Activated CD4-positive, alpha-beta memory T cell treated with anti-CD3 and anti-CD28 coated beads for 36 hours (primary cell): ENCODE measurements at regions of chr1 and their contacts with region 1.

Region 1: DNA sequence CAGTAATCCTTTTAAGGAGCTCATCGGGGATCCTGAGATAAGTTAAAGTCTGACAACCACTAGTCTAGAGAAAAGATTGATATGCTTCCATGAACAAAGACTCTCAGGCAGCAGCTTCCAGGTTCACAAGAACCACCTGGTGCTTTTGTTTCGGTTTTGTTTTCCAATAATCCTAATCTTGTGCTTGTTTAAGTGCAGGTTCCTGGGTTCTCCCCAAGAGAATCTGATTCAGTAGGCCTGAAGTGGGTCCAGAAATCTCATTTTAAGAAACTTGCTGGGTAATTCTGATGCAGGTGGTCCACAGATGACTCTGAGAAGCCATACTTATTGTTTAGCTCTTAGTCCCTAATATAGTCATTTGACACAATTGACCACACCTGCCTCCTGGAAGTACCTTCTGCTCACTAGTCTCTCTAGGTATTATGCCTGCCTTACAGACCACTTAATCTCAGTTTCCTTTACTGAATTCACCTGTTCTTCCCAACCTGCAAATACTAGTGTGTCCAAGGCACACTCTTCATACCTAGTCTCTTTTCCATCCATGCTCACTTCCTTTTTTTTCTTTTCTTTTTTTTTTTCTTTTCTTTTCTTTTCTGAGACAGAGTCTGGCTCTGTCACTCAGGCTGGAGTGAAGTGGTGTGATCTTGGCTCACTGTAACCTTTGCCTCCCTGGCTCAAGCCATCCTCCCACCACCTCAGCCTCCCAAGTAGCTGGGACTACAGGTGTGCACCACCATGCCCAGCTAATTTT is 20.5 kb upstream of the FRRS1 start:
- DNase-seq: no peak
- H3K4me3 Mint-ChIP-seq: no peak overlapping the region
- H3K27ac Mint-ChIP-seq: no peak overlapping the region
- H3K4me1 Mint-ChIP-seq: peaks cover 19% of the 10 kb centered on the region
- H3K27me3 Mint-ChIP-seq: peaks cover 20% of the 10 kb centered on the region

Region 2: GRCh38 chr1:99751877-99752504 is 34.9 kb before region 1 on chr1:
- CTCF ChIA-PET with region 1: no interaction called
- POLR2A ChIA-PET with region 1: no interaction called
- intact Hi-C with region 1: loop called (anchors 2 kb)
- DNase-seq: peak; percentile 25
- H3K4me3 Mint-ChIP-seq: no peak overlapping the region
- H3K27ac Mint-ChIP-seq: no peak overlapping the region
- H3K4me1 Mint-ChIP-seq: peaks cover 19% of the 10 kb centered on the region
- H3K27me3 Mint-ChIP-seq: no peaks in the 10 kb centered on the region